Upper lobe of right lung (tissue), 1 donor: ENCODE measurements at regions of chr18 and their contacts with region 1.

Region 1: GRCh38 chr18:59079264-59079972 is 60.3 kb upstream of the SEC11C start:
- DNase-seq: no peak
- ATAC-seq: no peak
- H3K4me3 ChIP-seq: no peak overlapping the region
- H3K27ac ChIP-seq: no peak overlapping the region
- H3K4me1 ChIP-seq: no peaks in the 10 kb centered on the region
- H3K27me3 ChIP-seq: no peaks in the 10 kb centered on the region
- CTCF ChIP-seq: no peak

Region 2: DNA sequence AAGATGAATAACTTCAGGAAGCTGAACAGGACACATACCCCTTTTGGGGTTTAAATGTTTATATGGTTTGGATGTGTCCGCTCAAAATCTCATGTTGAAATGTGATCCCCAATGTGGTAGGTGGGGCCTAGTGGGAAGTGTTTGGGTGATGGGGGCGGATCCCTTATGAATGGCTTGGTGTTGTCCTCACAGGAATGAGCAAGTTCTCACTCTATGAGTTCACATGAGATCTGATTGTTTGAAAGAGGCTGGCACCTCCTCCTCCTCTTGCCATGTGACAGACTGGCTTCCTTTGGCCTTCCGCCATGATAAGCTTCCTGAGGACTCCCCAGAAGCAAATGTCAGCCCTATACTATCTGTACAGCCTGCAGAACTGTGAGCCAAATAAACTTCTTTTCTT is 303.3 kb before region 1 on chr18:
- intact Hi-C with region 1: loop called (anchors 5 kb)
- DNase-seq: no peak
- ATAC-seq: no peak
- H3K4me3 ChIP-seq: no peak overlapping the region
- H3K27ac ChIP-seq: no peak overlapping the region
- H3K4me1 ChIP-seq: no peaks in the 10 kb centered on the region
- H3K27me3 ChIP-seq: no peaks in the 10 kb centered on the region
- CTCF ChIP-seq: no peak

Region 3: GRCh38 chr18:58980991-58981390 is 98.4 kb before region 1 on chr18:
- intact Hi-C with region 1: no loop called
- DNase-seq: no peak
- ATAC-seq: no peak
- H3K4me3 ChIP-seq: no peak overlapping the region
- H3K27ac ChIP-seq: no peak overlapping the region
- H3K4me1 ChIP-seq: peaks cover 4% of the 10 kb centered on the region
- H3K27me3 ChIP-seq: no peaks in the 10 kb centered on the region
- CTCF ChIP-seq: no peak

Region 4: GRCh38 chr18:60259052-60259681 is 1179.7 kb after region 1 on chr18:
- intact Hi-C with region 1: no loop called
- DNase-seq: no peak
- ATAC-seq: no peak
- H3K4me3 ChIP-seq: no peak overlapping the region
- H3K27ac ChIP-seq: no peak overlapping the region
- H3K4me1 ChIP-seq: no peaks in the 10 kb centered on the region
- H3K27me3 ChIP-seq: no peaks in the 10 kb centered on the region
- CTCF ChIP-seq: no peak